Activated CD8-positive, alpha-beta memory T cell treated with anti-CD3 and anti-CD28 coated beads, Interleukin-2, amount 10 ng/mL, durations not matched to agents 7 days and 5 days (primary cell): ENCODE measurements at regions of chr3 and their contacts with region 1.

Region 1: DNA sequence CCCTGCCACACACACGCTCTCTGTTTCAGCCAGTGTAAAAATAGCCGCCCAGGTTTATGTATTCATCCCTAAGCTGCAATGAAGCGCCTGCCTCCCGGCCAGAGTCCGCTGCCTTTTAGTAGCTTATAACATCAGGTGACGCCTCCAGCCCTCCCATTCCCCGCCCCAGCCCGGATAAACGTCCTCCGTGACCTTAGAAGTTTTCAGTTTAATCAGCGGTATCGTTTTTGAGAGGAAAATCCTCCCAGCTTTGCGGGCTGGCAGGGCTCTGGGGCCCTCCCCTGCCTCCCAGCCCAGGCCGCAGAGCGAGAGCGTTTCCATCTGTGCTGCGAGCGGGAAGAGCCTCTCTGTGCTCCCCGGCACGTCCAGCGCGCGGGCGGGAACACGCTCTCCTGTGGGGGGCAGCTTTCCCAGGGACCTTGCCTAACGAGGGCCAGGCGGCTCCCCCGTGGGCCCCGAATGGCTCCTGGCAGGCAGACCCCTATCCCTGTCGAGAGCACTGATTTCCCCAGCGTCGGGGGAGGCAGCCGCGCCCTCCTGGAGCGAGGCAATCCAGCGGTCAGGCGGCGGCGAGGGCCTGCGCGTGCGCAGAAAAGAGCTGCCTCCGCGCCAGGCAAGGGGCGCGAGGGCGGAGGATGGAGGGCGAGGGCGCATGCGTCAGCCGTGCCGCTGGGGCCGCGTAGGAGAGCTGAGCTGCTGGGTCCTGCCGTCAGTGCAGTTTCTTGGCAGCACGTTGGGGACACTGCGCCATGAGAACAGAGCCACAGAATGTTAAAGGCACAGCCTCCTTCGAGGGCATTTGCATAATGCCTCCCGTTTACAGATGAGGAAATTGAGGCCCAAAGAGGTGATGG is 71.1 kb downstream of the CCNL1 start:
- DNase-seq: peak; percentile 97
- ATAC-seq: peak; percentile 92
- H3K4me3 Mint-ChIP-seq: peak overlapping the region; percentile 74
- H3K27ac Mint-ChIP-seq: peak overlapping the region; percentile 96
- H3K4me1 Mint-ChIP-seq: peaks cover 68% of the 10 kb centered on the region
- H3K27me3 Mint-ChIP-seq: no peaks in the 10 kb centered on the region

Region 2: GRCh38 chr3:156943430-156943829 is 145.4 kb before region 1 on chr3:
- CTCF ChIA-PET with region 1: no interaction called
- DNase-seq: no peak
- ATAC-seq: no peak
- H3K4me3 Mint-ChIP-seq: no peak overlapping the region
- H3K27ac Mint-ChIP-seq: no peak overlapping the region
- H3K4me1 Mint-ChIP-seq: peaks cover 2% of the 10 kb centered on the region
- H3K27me3 Mint-ChIP-seq: peaks cover 22% of the 10 kb centered on the region

Region 3: DNA sequence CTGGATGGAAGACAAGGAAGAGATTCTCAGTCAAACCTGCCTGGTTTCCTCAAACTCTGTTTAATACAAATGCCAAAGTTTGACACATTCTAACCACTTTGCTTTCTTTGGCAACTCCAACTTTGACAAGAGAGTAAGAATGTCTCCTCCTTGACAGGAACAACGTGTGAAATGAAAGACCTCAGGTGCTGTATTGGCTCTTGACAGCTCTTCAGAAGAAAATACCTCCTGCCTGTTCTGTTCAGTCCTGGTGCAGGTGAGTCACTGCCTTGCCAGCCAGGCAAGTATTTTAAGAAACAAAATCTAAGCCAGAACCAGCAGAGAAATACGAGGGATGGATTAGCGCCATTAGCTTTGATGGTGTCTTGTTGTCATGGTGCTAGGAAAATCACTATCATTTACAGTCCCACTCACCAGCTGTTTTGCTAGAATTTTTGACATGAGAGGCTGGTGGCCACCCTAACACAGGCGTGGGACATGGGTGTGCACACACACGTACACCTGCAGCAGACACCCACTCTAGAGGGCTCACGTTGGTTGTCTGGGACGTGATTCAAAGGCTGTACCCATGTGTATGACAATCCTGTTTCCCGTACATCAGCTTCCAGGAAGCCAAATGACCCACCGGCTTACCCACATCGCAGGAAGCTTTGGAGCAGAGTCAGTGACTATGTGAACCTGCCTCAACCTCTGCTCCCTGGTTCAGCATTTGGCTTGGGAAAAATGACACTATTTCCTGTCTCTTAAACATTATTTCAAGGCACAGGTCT is 10.7 kb after region 1 on chr3:
- CTCF ChIA-PET with region 1: interaction called, 16 read pairs
- DNase-seq: no peak
- ATAC-seq: no peak
- H3K4me3 Mint-ChIP-seq: no peak overlapping the region
- H3K27ac Mint-ChIP-seq: peak overlapping the region; percentile 52
- H3K4me1 Mint-ChIP-seq: peaks cover 59% of the 10 kb centered on the region
- H3K27me3 Mint-ChIP-seq: no peaks in the 10 kb centered on the region

Region 4: GRCh38 chr3:157122116-157122515 is 33.3 kb after region 1 on chr3:
- CTCF ChIA-PET with region 1: interaction called, 332 read pairs
- DNase-seq: no peak
- ATAC-seq: no peak
- H3K4me3 Mint-ChIP-seq: no peak overlapping the region
- H3K27ac Mint-ChIP-seq: no peak overlapping the region
- H3K4me1 Mint-ChIP-seq: peaks cover 26% of the 10 kb centered on the region
- H3K27me3 Mint-ChIP-seq: no peaks in the 10 kb centered on the region